PC-3 (cell line): ENCODE measurements at regions of chr7 and their contacts with region 1.

Region 1: DNA sequence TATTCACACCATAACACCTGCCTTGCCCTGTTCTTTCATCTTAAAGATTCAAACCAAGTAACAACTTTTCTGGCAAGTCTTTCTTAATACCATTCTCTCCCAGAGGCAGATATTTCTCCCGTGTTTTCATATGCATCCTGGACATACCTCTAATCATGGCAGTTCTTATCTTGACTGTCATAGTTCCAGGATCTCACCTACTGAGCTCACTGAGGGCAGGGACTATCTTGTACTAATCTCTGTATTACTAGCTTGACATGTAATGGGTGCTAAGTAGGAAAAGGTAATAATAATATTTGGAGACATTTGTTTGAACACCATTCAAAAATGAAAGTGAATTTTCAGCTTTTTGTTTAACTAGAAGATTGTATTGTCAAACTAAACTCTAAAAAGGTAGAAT is 14.8 kb downstream of the DNAH11 start:
- DNase-seq: no peak
- ATAC-seq: no peak
- H3K4me3 ChIP-seq: no peak overlapping the region
- H3K27ac ChIP-seq: no peak overlapping the region
- H3K4me1 ChIP-seq: no peaks in the 10 kb centered on the region
- H3K27me3 ChIP-seq: peaks cover 20% of the 10 kb centered on the region
- CTCF ChIP-seq: no peak

Region 2: GRCh38 chr7:21587139-21587784 is 29.6 kb after region 1 on chr7:
- CTCF ChIA-PET with region 1: interaction called, 3 read pairs
- POLR2A ChIA-PET with region 1: interaction called, 10 read pairs
- intact Hi-C with region 1: no loop called
- DNase-seq: no peak
- ATAC-seq: no peak
- H3K4me3 ChIP-seq: no peak overlapping the region
- H3K27ac ChIP-seq: no peak overlapping the region
- H3K4me1 ChIP-seq: no peaks in the 10 kb centered on the region
- H3K27me3 ChIP-seq: peaks cover 41% of the 10 kb centered on the region; the same call in 1 of the 2 replicates
- CTCF ChIP-seq: no peak

Region 3: GRCh38 chr7:22219036-22219435 is 661.4 kb after region 1 on chr7:
- CTCF ChIA-PET with region 1: no interaction called
- POLR2A ChIA-PET with region 1: no interaction called
- intact Hi-C with region 1: no loop called
- DNase-seq: no peak
- ATAC-seq: no peak
- H3K4me3 ChIP-seq: no peak overlapping the region
- H3K27ac ChIP-seq: no peak overlapping the region
- H3K4me1 ChIP-seq: no peaks in the 10 kb centered on the region
- H3K27me3 ChIP-seq: no peaks in the 10 kb centered on the region
- CTCF ChIP-seq: no peak